Adrenal gland (tissue), 19 donors: ENCODE measurements at regions of chr12 and their contacts with region 1.

Region 1: DNA sequence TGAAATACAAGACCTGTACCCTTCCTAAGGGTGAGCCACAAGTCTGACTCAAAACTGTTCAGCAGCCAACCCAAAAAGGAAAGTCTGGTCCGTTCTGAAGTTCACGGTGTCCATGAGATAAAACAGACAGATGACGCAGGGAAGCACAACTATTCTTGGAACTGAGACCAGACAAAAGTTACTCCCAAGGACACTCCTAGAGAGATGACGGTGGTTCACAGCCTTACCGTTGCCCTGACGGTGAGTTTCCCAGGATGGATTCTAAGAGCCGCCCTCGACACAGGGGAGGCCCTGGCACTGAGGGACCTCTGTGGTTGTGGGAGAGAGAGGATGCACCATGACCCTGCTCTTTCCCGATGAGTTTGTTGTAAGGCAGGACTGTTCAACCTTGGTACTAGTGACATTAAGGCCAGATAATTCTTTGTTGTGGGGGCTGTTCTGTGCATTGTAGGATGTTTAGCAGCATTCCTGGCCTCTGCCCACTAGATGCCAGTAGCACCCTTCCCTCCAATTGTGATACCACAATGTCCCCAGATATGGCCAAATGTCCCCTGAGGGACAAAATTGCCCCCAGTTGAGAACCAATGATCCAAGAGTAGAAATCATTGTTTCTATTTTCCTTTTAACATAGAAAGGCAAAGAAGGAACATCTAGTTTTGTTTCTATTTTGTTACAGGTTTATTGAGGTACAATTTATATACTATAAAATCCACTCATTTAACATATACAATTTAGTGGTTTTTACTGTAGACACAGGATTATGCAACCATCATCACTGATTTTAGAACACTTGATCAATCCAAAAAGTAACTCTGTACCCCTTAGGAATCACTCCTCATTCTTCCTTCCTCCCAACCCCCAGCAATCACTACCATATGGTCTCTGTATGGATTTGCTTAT is 23.0 kb downstream of the OR10P1 start:
- DNase-seq: peak; percentile 77 to 94 (median 84)
- H3K4me3 ChIP-seq: no peak overlapping the region
- H3K27ac ChIP-seq: peak overlapping the region; percentile 79 to 95 (median 91)
- H3K4me1 ChIP-seq: peaks cover 12 to 17% of the 10 kb centered on the region in 2 donors
- H3K27me3 ChIP-seq: no peaks in the 10 kb centered on the region
- CTCF ChIP-seq: peak; percentile 18 to 81 (median 61)
- POLR2A ChIP-seq: peak in 1 of 2 donors; percentile 62

Region 2: DNA sequence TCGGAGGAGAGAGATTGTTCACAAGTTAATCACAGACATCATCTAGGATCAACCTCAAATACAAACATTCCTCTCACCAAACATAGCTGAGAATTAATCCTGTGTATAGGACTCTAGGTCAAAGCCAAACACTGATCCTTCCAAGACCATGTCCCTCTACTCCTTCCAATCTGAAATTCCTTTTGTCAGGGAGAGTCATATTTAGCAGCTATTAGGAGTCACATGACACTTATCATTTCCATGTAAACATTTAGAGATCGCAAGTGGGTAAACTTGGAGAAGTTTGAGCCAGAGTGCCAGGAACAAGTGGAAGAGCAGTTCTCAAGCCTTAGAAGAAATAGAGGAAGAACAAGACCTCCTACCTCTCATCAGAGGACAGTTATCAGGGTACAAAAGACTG is 73.9 kb before region 1 on chr12:
- intact Hi-C with region 1: no loop called
- DNase-seq: no peak
- H3K4me3 ChIP-seq: no peak overlapping the region
- H3K27ac ChIP-seq: no peak overlapping the region
- H3K4me1 ChIP-seq: no peaks in the 10 kb centered on the region
- H3K27me3 ChIP-seq: no peaks in the 10 kb centered on the region
- CTCF ChIP-seq: no peak
- POLR2A ChIP-seq: no peak

Region 3: DNA sequence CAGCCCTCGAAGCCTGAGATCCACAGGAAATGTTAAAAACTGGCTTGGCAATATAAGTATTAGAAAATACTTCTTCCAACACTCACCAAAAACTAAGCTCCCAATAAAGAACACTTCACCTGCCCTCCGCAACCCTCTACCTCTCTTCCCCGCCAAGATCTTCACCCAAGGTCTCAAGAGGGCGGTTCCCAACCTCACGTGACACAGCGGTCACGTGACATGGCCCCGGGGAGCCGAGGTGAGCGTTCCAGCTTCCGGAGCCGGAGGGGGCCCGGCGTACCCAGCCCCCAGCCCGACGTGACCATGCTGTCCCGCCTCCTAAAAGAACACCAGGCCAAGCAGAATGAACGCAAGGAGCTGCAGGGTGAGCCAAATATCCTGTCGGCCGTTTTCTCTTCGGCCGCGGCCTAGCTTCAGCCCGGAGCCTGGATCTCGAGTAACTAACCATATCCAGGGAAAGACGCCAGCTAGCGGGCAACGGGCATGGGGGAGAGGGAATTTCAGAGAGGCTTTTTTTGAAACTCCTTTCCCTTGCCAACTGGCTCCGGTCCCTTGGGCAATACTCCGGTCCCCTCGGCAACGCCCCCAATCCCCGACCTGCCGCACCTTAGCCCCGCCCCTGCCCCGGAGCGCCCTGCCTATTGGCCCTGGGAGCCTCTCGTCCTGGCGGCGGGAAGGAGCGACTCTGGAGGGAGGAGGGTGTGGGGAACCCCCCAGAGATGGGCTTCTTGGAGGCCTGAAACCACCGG is 56.3 kb after region 1 on chr12 and contains the start of gene BLOC1S1:
- intact Hi-C with region 1: loop called in 1 of 2 experiments (anchors 5 kb)
- DNase-seq: peak; percentile 94 to 97 (median 95)
- H3K4me3 ChIP-seq: peak within 1 kb of the TSS; percentile 27 to 70 (median 64)
- H3K27ac ChIP-seq: peak within 1 kb of the TSS; percentile 57 to 96 (median 91)
- H3K4me1 ChIP-seq: peaks cover 13 to 31% of the 10 kb centered on the region in 2 donors
- H3K27me3 ChIP-seq: no peaks in the 10 kb centered on the region
- CTCF ChIP-seq: peak in 3 of 6 experiments; percentile 8 to 19 (median 10)
- POLR2A ChIP-seq: peak in 1 of 2 donors; percentile 59
- total RNA-seq, gene BLOC1S1: 180 to 304 (median 220) TPM